HCT116 (cell line): ENCODE measurements at regions of chr5 and their contacts with region 1.

Region 1: DNA sequence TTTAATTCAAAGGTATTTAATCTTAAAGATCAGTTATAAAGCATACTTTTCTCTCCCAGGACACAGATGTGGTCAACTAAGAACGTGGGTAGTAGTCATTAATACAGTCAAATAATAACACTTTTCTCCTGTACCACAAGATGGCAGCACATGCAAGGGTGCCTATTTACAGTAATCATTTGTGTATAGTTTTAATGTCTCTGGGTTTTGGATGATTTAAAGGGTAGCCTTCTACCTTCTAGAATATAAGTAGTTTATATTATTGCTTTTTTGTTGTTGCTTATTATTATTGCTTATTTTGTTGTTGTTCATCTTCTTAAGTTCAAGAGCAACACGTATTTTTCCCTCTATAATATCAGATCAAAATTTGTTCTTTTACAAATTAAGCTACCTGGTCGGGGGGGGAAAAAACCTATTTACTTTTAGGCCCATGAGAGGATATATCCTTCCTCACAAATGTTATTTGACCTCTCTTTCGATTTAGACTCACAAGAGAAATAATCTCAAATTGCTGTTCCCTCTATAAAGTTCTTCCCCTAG is 59.6 kb upstream of the SLC27A6 start:
- DNase-seq: peak; percentile 61
- ATAC-seq: peak; percentile 97
- H3K4me3 ChIP-seq: no peak overlapping the region
- H3K27ac ChIP-seq: no peak overlapping the region
- H3K4me1 ChIP-seq: no peaks in the 10 kb centered on the region; a peak in 1 of 4 replicates
- H3K27me3 ChIP-seq: no peaks in the 10 kb centered on the region
- CTCF ChIP-seq: peak; percentile 62 to 81 (median 76)
- POLR2A ChIP-seq: no peak
- RAD21 ChIP-seq: peak; percentile 88

Region 2: DNA sequence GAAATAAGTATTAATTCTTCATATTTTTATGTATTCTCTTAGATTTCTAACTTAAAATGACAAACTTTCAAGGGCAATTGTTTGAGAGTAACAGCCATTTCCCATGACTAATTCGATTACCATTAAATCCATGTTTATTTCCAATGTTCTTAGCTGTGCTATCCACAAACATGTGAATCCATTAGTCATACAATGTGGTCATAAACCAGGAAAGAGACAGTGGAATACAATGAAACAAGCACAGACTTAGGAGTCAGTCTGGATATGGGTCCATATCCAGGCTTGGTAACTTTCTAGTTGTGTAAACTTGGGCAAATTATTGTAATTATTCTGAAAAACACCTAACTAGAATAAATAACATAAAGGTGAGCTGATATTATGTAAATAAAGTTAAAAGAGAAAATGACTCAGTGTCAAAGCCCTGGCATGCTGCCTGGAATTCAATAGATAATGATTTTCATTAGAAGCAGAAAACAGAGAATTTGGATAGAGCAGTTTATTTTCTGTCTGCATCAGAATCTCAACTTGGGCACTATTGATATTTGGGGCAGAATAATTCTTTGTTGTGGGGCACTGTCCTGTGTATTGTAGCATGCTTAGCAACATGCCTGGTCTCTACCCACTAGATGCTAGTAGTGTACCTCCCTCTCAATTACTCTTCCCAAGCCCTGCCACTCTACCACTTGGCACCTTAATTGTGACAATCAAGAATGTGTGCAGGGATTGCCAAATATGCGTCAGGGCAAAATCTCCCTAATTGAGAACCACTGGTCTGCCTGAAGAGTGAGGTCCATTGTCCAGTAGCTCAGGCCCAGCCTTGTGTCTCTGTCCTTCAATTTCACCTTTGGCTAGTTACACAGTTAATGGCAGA is 14.9 kb after region 1 on chr5:
- CTCF ChIA-PET with region 1: interaction called, 12 read pairs
- POLR2A ChIA-PET with region 1: no interaction called
- RAD21 ChIA-PET with region 1: no interaction called
- intact Hi-C with region 1: no loop called
- DNase-seq: peak; percentile 68
- ATAC-seq: peak; percentile 89
- H3K4me3 ChIP-seq: no peak overlapping the region
- H3K27ac ChIP-seq: no peak overlapping the region
- H3K4me1 ChIP-seq: peaks cover 9 to 14% of the 10 kb centered on the region in 2 experiments
- H3K27me3 ChIP-seq: no peaks in the 10 kb centered on the region
- CTCF ChIP-seq: no peak
- POLR2A ChIP-seq: no peak
- RAD21 ChIP-seq: no peak

Region 3: GRCh38 chr5:129053438-129053837 is 147.8 kb after region 1 on chr5:
- CTCF ChIA-PET with region 1: interaction called, 13 read pairs
- POLR2A ChIA-PET with region 1: no interaction called
- RAD21 ChIA-PET with region 1: no interaction called
- intact Hi-C with region 1: loop called (anchors 1 kb)
- DNase-seq: no peak
- ATAC-seq: no peak
- H3K4me3 ChIP-seq: no peak overlapping the region
- H3K27ac ChIP-seq: no peak overlapping the region
- H3K4me1 ChIP-seq: no peaks in the 10 kb centered on the region
- H3K27me3 ChIP-seq: no peaks in the 10 kb centered on the region
- CTCF ChIP-seq: peak in 1 of 3 experiments; percentile 37; a peak in 2 of 6 replicates
- POLR2A ChIP-seq: no peak
- RAD21 ChIP-seq: peak; percentile 56

Region 4: GRCh38 chr5:129094087-129094923 is 188.7 kb after region 1 on chr5 and contains the start of gene ISOC1:
- CTCF ChIA-PET with region 1: interaction called, 14 read pairs
- POLR2A ChIA-PET with region 1: interaction called, 4 read pairs
- RAD21 ChIA-PET with region 1: no interaction called
- intact Hi-C with region 1: no loop called
- DNase-seq: peak; percentile 74
- ATAC-seq: peak; percentile 92
- H3K4me3 ChIP-seq: peak within 1 kb of the TSS; percentile 82 to 84
- H3K27ac ChIP-seq: peak within 1 kb of the TSS; percentile 76
- H3K4me1 ChIP-seq: peaks cover 8 to 14% of the 10 kb centered on the region in 2 experiments; a peak in 2 of 4 replicates
- H3K27me3 ChIP-seq: no peaks in the 10 kb centered on the region
- CTCF ChIP-seq: peak in 2 of 3 experiments; percentile 2 to 5; a peak in 1 of 6 replicates
- POLR2A ChIP-seq: peak; percentile 88
- RAD21 ChIP-seq: peak; percentile 36; the same call in 1 of the 2 replicates
- total RNA-seq, gene ISOC1: 42.9 TPM

Region 5: DNA sequence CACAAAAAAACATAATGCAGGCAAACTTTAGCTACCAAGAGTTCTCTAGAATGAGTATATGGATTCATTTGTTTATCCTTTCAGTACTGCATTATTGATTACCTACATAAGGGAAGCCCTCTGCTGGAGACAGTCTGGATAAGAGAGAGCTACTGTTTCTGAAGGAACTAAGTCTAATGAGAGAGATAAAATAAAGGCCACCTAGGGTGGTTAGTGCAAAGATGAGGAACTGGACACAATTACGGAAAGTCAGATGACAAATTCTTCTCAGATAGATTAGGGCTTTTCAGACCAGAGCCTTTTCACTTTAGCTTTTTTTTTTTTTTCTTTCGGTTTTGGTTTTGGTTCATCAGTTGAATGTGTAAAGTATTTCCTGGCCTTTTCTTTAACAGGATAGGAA is 220.2 kb after region 1 on chr5:
- CTCF ChIA-PET with region 1: interaction called, 6 read pairs
- POLR2A ChIA-PET with region 1: no interaction called
- RAD21 ChIA-PET with region 1: no interaction called
- intact Hi-C with region 1: loop called (anchors 1 kb)
- DNase-seq: no peak
- ATAC-seq: no peak
- H3K4me3 ChIP-seq: no peak overlapping the region
- H3K27ac ChIP-seq: no peak overlapping the region
- H3K4me1 ChIP-seq: no peaks in the 10 kb centered on the region
- H3K27me3 ChIP-seq: no peaks in the 10 kb centered on the region
- CTCF ChIP-seq: peak in 2 of 3 experiments; percentile 1 to 37; a peak in 2 of 6 replicates
- POLR2A ChIP-seq: no peak
- RAD21 ChIP-seq: no peak

Region 6: DNA sequence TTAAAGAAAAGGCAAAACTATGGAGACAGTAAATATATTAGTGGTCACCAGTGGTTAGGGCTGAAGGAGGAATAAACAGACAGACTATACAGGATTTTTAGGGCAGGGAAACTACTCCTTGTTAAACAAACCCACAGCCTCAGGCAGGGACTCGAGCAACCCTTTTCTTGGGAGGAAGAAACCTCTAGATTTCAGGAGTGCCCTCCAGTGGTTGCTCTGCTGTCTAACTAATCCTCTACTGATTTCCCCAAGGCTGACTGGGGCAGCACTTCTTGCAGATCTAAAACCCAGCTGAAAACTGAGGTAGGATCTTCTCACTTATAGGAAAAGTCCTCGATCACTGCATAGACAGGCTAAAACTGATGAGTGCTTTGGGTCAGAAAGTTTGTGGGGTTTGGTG is 365.7 kb after region 1 on chr5:
- CTCF ChIA-PET with region 1: interaction called, 6 read pairs
- POLR2A ChIA-PET with region 1: no interaction called
- RAD21 ChIA-PET with region 1: no interaction called
- intact Hi-C with region 1: loop called (anchors 2 kb)
- DNase-seq: peak; percentile 19
- ATAC-seq: peak; percentile 78
- H3K4me3 ChIP-seq: no peak overlapping the region
- H3K27ac ChIP-seq: no peak overlapping the region
- H3K4me1 ChIP-seq: no peaks in the 10 kb centered on the region
- H3K27me3 ChIP-seq: no peaks in the 10 kb centered on the region
- CTCF ChIP-seq: peak; percentile 25 to 43 (median 38); a peak in 5 of 6 replicates
- POLR2A ChIP-seq: no peak
- RAD21 ChIP-seq: peak; percentile 41; the same call in 1 of the 2 replicates